Activated CD4-positive, alpha-beta T cell treated with anti-CD3 and anti-CD28 coated beads for 36 hours (primary cell): ENCODE measurements at regions of chr20 and their contacts with region 1.

Region 1: GRCh38 chr20:39049684-39050554 is 87.8 kb downstream of the DHX35 start:
- DNase-seq: peak; percentile 86
- ATAC-seq: peak; percentile 83
- H3K4me3 Mint-ChIP-seq: peak overlapping the region; percentile 68
- H3K27ac Mint-ChIP-seq: peak overlapping the region; percentile 48
- H3K4me1 Mint-ChIP-seq: peaks cover 5% of the 10 kb centered on the region
- H3K27me3 Mint-ChIP-seq: peaks cover 3% of the 10 kb centered on the region

Region 2: DNA sequence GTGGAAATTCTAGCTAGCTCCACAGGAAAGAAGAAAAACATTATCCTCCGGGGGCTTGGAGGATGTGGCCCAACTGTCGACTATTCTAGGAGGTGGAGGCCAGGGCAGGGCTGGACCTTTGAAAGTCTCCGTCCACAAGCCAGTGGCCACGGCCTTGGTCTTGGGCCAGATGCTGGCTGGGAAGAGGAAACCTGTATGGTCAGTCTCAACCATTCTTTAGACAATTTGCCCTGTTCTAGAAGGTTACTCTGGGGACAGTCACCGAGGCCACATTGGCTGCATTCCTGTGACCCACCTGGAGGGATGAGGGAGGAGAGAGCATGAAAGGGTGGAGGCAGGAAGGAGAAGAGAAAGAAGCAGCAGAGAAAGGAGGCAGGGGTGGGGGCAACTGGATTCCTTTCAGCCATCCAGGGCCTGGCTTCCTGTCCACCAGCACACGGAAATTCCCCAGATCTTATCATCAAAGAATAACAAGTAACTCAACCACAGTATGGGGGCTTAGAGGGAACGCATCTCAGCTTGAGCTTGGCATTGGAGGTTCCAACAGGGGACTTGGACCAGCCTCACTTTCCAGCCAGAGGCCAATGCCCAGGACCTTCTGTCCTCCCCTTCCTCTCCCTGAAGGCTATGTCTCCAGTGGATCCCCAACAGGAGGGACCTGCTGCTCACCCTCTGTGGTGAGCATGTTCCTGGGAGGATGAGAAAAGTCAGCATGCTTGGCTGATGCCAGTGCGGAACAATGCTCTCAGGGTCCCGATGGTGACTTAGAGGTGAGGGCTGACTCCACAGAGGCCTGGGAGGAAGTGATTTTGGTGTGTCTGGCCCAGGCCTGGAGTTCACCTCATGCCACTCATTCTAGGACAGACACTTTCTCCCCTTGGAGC is 915.3 kb before region 1 on chr20:
- CTCF ChIA-PET with region 1: no interaction called
- POLR2A ChIA-PET with region 1: no interaction called
- intact Hi-C with region 1: no loop called
- DNase-seq: no peak
- ATAC-seq: no peak
- H3K4me3 Mint-ChIP-seq: no peak overlapping the region
- H3K27ac Mint-ChIP-seq: no peak overlapping the region
- H3K4me1 Mint-ChIP-seq: peaks cover 5% of the 10 kb centered on the region
- H3K27me3 Mint-ChIP-seq: no peaks in the 10 kb centered on the region

Region 3: DNA sequence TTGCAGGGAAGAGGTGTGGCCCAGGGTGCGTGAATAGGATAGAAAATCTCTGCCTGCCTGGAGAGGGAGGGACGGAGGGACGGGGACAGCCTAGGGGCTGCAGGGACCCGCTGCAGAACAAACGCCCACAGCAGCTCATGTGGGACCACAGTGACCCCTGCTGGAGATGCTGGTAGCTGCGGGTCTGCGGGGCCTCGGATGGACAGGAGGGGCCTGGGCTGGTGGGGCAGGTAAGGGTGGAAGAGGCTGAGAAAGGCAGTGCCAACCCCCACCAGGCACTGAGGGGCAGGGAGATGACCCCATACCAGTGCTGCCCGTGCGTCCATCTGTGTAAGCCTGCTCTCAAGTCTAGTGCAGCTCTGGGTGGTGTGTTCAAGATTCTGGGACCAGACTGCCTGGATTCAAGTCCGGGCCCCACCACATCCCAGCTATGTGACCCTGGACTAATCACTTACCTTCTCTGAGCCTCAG is 828.8 kb before region 1 on chr20:
- CTCF ChIA-PET with region 1: no interaction called
- POLR2A ChIA-PET with region 1: no interaction called
- intact Hi-C with region 1: no loop called
- DNase-seq: peak; percentile 83
- ATAC-seq: peak; percentile 83
- H3K4me3 Mint-ChIP-seq: no peak overlapping the region
- H3K27ac Mint-ChIP-seq: no peak overlapping the region
- H3K4me1 Mint-ChIP-seq: no peaks in the 10 kb centered on the region
- H3K27me3 Mint-ChIP-seq: peaks cover 2% of the 10 kb centered on the region

Region 4: GRCh38 chr20:38645980-38646858 is 403.7 kb before region 1 on chr20:
- CTCF ChIA-PET with region 1: interaction called, 7 read pairs
- POLR2A ChIA-PET with region 1: no interaction called
- intact Hi-C with region 1: loop called (anchors 1 to 5 kb)
- DNase-seq: peak; percentile 93
- ATAC-seq: peak; percentile 98
- H3K4me3 Mint-ChIP-seq: peak overlapping the region; percentile 44
- H3K27ac Mint-ChIP-seq: peak overlapping the region; percentile 41
- H3K4me1 Mint-ChIP-seq: peaks cover 7% of the 10 kb centered on the region
- H3K27me3 Mint-ChIP-seq: peaks cover 30% of the 10 kb centered on the region

Region 5: GRCh38 chr20:39029324-39029820 is 20.5 kb before region 1 on chr20:
- CTCF ChIA-PET with region 1: interaction called, 16 read pairs
- POLR2A ChIA-PET with region 1: no interaction called
- intact Hi-C with region 1: no loop called
- DNase-seq: no peak
- ATAC-seq: no peak
- H3K4me3 Mint-ChIP-seq: no peak overlapping the region
- H3K27ac Mint-ChIP-seq: no peak overlapping the region
- H3K4me1 Mint-ChIP-seq: peaks cover 19% of the 10 kb centered on the region
- H3K27me3 Mint-ChIP-seq: no peaks in the 10 kb centered on the region

Region 6: DNA sequence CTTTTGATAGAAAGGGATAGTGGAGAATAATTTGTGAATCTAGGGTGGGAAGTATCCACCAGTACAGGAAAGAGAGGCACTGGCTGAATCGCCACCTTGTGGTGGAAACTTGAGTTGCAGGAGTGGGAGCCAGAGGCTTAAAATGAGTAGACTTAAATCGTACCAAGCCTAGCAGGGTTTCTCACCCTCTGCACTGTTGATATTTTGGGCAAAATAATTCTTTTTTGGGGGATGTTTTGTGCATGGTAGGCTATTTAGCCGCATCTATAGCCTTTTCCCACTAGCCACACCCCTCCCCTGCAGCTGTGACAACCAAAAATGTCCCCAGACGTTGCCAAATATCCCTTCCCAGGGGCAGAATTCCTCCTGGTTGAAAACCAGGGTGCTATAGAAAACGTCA is 31.3 kb after region 1 on chr20:
- CTCF ChIA-PET with region 1: interaction called, 90 read pairs
- POLR2A ChIA-PET with region 1: no interaction called
- intact Hi-C with region 1: loop called (anchors 1 kb)
- DNase-seq: peak; percentile 90
- ATAC-seq: peak; percentile 78
- H3K4me3 Mint-ChIP-seq: no peak overlapping the region
- H3K27ac Mint-ChIP-seq: no peak overlapping the region
- H3K4me1 Mint-ChIP-seq: no peaks in the 10 kb centered on the region
- H3K27me3 Mint-ChIP-seq: peaks cover 11% of the 10 kb centered on the region